H1 (cell line): ENCODE measurements at regions of chr14 and their contacts with region 1.

Region 1: DNA sequence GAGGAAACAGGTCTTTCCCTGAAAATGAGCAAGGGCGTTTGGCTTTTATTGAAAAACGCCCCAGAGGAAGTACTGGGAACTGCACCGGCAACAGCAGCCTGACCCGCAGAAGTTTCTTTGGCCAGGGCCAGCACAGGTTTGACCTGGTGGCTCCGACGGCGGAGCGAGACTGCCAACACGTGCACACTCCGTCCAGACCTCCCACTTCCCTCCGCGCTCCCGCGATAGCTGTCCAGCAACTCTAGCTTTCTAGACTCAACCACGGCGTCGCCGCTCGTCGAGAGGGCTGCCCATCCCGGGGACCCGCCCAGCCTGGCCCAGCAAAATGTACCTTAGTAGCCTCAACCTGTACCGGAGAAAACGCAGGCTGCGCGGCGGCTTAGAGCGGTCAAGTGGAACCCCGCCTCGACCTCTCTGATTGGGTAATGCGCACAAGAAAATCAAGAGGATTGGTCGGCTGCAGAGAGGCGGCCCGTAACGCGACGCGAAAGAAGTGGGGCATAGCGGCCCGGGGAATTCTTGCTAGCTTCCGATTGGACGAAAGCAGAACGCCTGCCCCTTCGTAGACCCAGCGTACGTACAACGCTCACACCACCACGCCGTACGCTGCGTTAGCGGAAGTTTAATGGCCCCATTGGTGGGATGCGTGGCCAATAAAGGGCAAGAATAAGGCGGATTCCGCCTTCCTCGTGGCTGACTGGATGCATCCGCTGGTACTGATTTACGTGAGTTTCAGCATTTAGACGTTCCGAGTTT is at the start of gene WDR89:
- DNase-seq: peak; percentile 94 to 98
- H3K4me3 ChIP-seq: peak within 1 kb of the TSS; percentile 66 to 92 (median 83)
- H3K27ac ChIP-seq: peak within 1 kb of the TSS; percentile 97
- H3K4me1 ChIP-seq: no peaks in the 10 kb centered on the region; a peak in 1 of 7 replicates
- H3K27me3 ChIP-seq: no peaks in the 10 kb centered on the region
- CTCF ChIP-seq: peak; percentile 42 to 85 (median 71); a peak in 3 of 4 replicates
- EP300 ChIP-seq: 0 out of 3 replicates have a peak, but pooled peaks of 1 of the 2 experiments have one; percentile 17
- POLR2A ChIP-seq: peak; percentile 78 to 93
- RAD21 ChIP-seq: peak; percentile 48 to 50
- total RNA-seq, gene WDR89: 32.0 and 32.9 TPM in 2 replicates

Region 2: GRCh38 chr14:63543000-63543825 is 98.4 kb before region 1 on chr14 and contains the start of gene PPP2R5E:
- CTCF ChIA-PET with region 1: interaction called, 3 read pairs
- POLR2A ChIA-PET with region 1: interaction called, 17 read pairs
- DNase-seq: peak; percentile 93 to 98
- H3K4me3 ChIP-seq: peak within 1 kb of the TSS; percentile 83 to 99 (median 88)
- H3K27ac ChIP-seq: peak within 1 kb of the TSS; percentile 69
- H3K4me1 ChIP-seq: peaks cover 0 to 4% (median 0%) of the 10 kb centered on the region in 4 experiments; a peak in 3 of 7 replicates
- H3K27me3 ChIP-seq: no peaks in the 10 kb centered on the region
- CTCF ChIP-seq: no peak
- EP300 ChIP-seq: no peak; a peak in 1 of 3 replicates
- POLR2A ChIP-seq: peak; percentile 57 to 93
- RAD21 ChIP-seq: no peak
- total RNA-seq, gene PPP2R5E: 59.6 and 64.6 TPM in 2 replicates